ENCODE measurements at regions of chr4 and their contacts with region 1.

Region 1: GRCh38 chr4:183659029-183659871 is at the starts of genes RWDD4 and TRAPPC11:
- DNase-seq: peak; percentile 98
- H3K4me3 ChIP-seq: peak within 1 kb of the TSS; percentile 53 to 94 (median 88)
- H3K27ac ChIP-seq: peak within 1 kb of the TSS; percentile 87 to 93 (median 92)
- H3K4me1 ChIP-seq: peaks cover 5 to 32% (median 19%) of the 10 kb centered on the region in 4 donors
- H3K27me3 ChIP-seq: no peaks in the 10 kb centered on the region
- CTCF ChIP-seq: peak in 4 of 5 experiments; percentile 21 to 77 (median 42)
- EP300 ChIP-seq: no peak
- POLR2A ChIP-seq: peak; percentile 94
- total RNA-seq, gene RWDD4: 4.1 to 16.9 (median 11.6) TPM
- total RNA-seq, gene TRAPPC11: 47.8 to 61.1 (median 52.1) TPM

Region 2: DNA sequence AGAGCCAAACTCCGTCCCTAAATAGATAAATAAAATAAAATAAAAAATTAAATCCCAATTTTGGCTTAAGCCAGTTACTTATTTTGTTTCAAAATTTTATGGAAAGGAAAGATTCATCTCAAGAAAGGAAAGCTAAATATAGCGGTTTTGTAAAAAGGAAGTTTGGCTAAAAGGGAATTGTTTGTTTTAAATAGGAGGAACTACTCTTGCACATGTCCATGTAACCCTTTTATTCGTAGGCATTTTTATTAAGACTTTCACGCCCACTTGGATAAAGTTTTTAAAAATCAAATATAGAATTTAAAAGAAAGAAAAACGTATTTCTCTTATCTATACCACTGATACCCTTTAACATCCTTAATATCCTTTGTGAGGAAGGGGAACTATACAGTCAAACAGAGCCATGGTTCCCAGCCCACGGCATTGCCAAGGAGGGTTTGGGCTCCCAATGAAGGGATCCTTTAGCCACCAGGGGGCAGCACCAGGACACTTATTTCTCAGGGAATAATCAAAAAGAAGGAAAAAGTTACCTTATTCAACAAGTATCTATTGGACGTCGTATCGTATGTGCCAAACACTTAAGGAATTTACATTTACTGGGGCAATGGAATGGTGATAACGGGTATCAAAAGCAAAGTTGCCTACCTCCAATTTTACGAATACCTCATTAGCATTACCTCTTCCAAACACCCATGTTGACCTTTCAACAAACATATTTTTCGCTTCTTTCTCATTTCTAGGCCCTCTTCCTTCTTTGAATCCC is 187.1 kb before region 1 on chr4:
- in situ Hi-C with region 1: loop called in 1 of 4 experiments (anchors 25 kb)
- intact Hi-C with region 1: no loop called
- DNase-seq: peak; percentile 88
- H3K4me3 ChIP-seq: no peak overlapping the region
- H3K27ac ChIP-seq: no peak overlapping the region
- H3K4me1 ChIP-seq: peaks cover 0 to 6% (median 2%) of the 10 kb centered on the region in 4 donors
- H3K27me3 ChIP-seq: peaks cover 3% of the 10 kb centered on the region
- CTCF ChIP-seq: peak; percentile 83 to 91 (median 87)
- EP300 ChIP-seq: no peak
- POLR2A ChIP-seq: no peak

Region 3: GRCh38 chr4:183504064-183504929 is 155.0 kb before region 1 on chr4:
- in situ Hi-C with region 1: loop called in 1 of 4 experiments (anchors 10 kb)
- intact Hi-C with region 1: loop called (anchors 2 kb)
- DNase-seq: peak; percentile 99
- H3K4me3 ChIP-seq: peak overlapping the region; percentile 70 to 91 (median 82)
- H3K27ac ChIP-seq: peak overlapping the region; percentile 93 to 98 (median 97)
- H3K4me1 ChIP-seq: peaks cover 13 to 36% (median 21%) of the 10 kb centered on the region in 4 donors
- H3K27me3 ChIP-seq: no peaks in the 10 kb centered on the region
- CTCF ChIP-seq: peak in 2 of 5 experiments; percentile 36 to 50
- EP300 ChIP-seq: no peak
- POLR2A ChIP-seq: peak; percentile 84

Region 4: GRCh38 chr4:184028394-184029374 is 369.4 kb after region 1 on chr4:
- in situ Hi-C with region 1: no loop called
- intact Hi-C with region 1: no loop called
- DNase-seq: no peak
- H3K4me3 ChIP-seq: peak overlapping the region in 1 of 4 donors; percentile 40
- H3K27ac ChIP-seq: no peak overlapping the region
- H3K4me1 ChIP-seq: peaks cover 0 to 4% (median 0%) of the 10 kb centered on the region in 4 donors
- H3K27me3 ChIP-seq: no peaks in the 10 kb centered on the region
- CTCF ChIP-seq: no peak
- EP300 ChIP-seq: no peak
- POLR2A ChIP-seq: no peak

Measured in transverse colon (tissue), 4 donors.